Colonic mucosa (tissue), 4 donors: ENCODE measurements at regions of chr11 and their contacts with region 1.

Region 1: DNA sequence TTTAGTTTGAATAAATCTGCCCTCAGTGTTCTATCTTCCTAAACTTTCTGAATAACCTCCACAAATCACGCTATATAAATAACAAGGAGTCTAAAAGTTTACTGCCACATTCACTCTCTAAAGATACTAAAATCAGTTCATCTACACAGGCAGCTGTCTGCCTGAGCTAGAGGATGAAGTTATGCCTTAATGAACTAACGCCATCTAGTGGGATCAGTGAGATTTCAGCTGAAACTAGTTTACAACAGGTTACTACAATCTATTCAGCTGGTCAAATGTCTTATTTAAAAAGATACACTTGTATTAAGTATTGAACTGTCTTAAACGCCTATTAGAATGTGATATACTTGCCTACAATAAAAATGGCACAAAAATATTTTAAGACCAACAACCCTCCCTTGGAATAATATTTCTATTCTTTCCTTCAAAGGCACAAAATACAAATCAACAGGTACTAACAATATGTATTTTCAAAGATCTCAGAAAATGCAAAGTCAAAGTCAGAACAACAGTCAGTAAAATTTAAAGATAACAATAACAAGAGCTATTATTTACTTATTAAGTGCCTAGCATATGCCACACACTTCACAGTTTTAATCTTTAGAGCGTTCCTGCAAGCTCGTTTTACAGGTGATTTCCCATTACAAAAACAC is 84.1 kb downstream of the LARGE2 start:
- DNase-seq: peak; percentile 41
- H3K4me3 ChIP-seq: no peak overlapping the region
- H3K27ac ChIP-seq: no peak overlapping the region
- H3K4me1 ChIP-seq: no peaks in the 10 kb centered on the region
- H3K27me3 ChIP-seq: no peaks in the 10 kb centered on the region
- CTCF ChIP-seq: peak; percentile 60

Region 2: DNA sequence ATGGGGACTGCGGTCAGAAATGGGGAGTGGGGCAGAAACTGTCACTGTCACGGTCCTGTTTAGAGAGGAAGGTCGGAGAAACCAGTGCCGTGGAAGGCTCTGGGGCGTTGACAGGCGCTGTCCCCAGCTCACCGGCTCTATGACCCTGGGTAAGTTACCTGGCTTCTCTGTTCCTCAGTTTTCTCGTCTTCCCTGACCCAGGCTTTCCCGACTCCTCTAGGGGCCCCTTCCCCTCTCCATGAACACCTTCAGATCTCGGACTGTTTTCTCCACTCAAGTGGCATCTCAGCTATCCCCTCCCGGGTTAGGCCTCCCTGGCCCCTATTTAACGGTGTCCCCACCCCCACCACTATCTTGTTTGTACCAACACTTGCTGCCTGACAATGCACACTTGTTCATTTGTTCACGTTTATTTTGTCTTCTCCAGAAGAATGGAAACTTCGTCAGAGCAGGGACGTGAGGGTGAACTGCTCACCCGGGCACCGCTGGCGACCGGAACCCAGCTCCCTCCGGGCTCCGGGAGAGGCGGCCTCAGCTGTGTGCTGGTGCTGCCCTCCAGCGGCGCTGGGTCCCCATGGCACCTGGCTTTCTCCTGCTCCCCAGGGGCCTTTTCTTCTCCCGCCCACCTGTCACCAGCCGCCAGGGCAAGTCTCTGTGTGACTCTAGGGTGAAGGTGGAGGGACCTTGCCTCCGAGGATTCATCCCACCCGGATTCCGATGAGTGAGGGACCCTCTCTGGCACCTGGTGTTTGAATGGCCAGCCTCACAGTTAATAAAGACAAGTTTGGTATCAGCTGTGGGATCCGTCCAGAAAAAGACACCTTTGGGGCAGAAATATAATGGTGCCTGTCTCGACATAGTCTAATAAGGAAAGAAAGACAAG is 234.7 kb before region 1 on chr11:
- intact Hi-C with region 1: loop called (anchors 10 kb)
- DNase-seq: peak; percentile 83
- H3K4me3 ChIP-seq: peak overlapping the region; percentile 61
- H3K27ac ChIP-seq: no peak overlapping the region
- H3K4me1 ChIP-seq: no peaks in the 10 kb centered on the region
- H3K27me3 ChIP-seq: no peaks in the 10 kb centered on the region
- CTCF ChIP-seq: peak; percentile 91

Region 3: DNA sequence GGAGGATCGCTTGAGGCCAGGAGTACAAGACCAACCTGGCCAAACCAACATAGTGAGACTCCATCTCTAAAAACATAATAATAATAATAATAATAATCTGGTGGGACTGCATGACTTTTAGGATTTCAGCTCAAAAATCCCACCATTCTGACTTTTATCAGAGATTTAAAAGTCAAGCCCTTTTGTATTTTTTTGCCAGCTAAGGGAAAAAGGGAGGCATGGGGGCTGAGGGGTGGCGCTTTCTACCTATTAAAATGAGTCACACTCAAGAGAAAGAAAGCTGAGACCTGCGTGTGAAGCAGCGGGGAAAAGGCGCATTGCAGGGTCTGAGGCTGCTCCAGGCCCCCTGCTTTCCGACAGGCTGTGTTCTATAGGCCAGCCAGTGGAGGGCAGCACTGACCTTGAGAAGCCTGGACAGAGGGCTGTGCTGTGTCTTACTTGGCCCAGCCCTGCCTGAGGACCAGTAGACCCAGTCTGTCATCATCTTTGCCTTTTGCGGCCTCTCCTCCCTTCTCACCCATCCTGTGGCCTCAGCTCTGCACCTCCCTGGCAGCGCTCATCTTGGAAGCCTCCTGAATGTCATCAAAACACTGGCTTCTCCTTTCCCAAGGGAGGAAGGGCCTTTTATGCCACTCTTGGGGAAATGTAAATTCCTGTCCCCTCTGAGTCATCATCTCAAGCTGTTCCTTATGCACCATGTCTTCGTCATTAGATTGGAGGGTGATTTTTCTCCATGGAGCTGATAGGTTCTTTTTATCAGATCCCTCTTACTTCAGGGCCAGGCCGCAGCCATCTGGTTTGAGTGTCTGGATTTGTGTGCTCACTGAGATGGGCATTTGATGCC is 133.8 kb before region 1 on chr11:
- intact Hi-C with region 1: loop called (anchors 10 kb)
- DNase-seq: no peak
- H3K4me3 ChIP-seq: no peak overlapping the region
- H3K27ac ChIP-seq: no peak overlapping the region
- H3K4me1 ChIP-seq: no peaks in the 10 kb centered on the region
- H3K27me3 ChIP-seq: no peaks in the 10 kb centered on the region
- CTCF ChIP-seq: peak; percentile 54

Region 4: GRCh38 chr11:45964911-45965389 is 41.6 kb before region 1 on chr11:
- intact Hi-C with region 1: loop called (anchors 5 kb)
- DNase-seq: peak; percentile 54
- H3K4me3 ChIP-seq: no peak overlapping the region
- H3K27ac ChIP-seq: no peak overlapping the region
- H3K4me1 ChIP-seq: no peaks in the 10 kb centered on the region
- H3K27me3 ChIP-seq: no peaks in the 10 kb centered on the region
- CTCF ChIP-seq: peak; percentile 78

Region 5: GRCh38 chr11:46237248-46238077 is 230.9 kb after region 1 on chr11:
- intact Hi-C with region 1: no loop called
- DNase-seq: peak; percentile 62
- H3K4me3 ChIP-seq: peak overlapping the region; percentile 50
- H3K27ac ChIP-seq: peak overlapping the region; percentile 61
- H3K4me1 ChIP-seq: peaks cover 12% of the 10 kb centered on the region
- H3K27me3 ChIP-seq: peaks cover 11% of the 10 kb centered on the region
- CTCF ChIP-seq: no peak